Heart right ventricle (tissue), 16 donors: ENCODE measurements at regions of chr3 and their contacts with region 1.

Region 1: DNA sequence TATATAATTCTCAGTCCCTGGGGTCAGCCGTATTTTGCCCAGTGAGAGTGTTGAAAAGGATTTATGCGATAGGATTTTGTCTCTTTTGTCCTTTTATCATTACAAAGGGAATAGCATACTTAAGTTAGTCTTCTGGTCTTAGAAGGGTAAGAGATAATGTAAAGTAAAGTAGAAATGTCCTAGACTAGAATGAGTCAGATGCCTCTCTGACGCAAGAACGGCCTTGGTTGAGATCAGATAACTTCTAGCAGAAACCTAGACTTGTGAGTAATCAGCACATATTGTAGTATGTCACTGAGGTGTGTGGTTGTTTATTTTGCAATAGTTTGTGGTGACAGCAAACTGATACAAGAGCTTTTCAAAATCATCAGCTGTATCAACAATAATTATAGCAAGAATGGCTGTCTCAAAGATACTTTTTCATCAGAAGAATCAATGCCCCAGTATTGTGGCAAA is 866.1 kb downstream of the NSUN3 start:
- DNase-seq: no peak
- ATAC-seq: peak in 1 of 8 donors; percentile 73
- H3K4me3 ChIP-seq: no peak overlapping the region
- H3K27ac ChIP-seq: no peak overlapping the region
- H3K4me1 ChIP-seq: no peaks in the 10 kb centered on the region
- H3K27me3 ChIP-seq: no peaks in the 10 kb centered on the region
- CTCF ChIP-seq: no peak

Region 2: GRCh38 chr3:94862703-94863102 is 66.2 kb before region 1 on chr3:
- intact Hi-C with region 1: loop called in 1 of 10 experiments (anchors 10 kb)
- DNase-seq: no peak
- ATAC-seq: no peak
- H3K4me3 ChIP-seq: no peak overlapping the region
- H3K27ac ChIP-seq: no peak overlapping the region
- H3K4me1 ChIP-seq: no peaks in the 10 kb centered on the region
- H3K27me3 ChIP-seq: no peaks in the 10 kb centered on the region
- CTCF ChIP-seq: peak in 8 of 9 donors; percentile 18 to 60 (median 44)

Region 3: DNA sequence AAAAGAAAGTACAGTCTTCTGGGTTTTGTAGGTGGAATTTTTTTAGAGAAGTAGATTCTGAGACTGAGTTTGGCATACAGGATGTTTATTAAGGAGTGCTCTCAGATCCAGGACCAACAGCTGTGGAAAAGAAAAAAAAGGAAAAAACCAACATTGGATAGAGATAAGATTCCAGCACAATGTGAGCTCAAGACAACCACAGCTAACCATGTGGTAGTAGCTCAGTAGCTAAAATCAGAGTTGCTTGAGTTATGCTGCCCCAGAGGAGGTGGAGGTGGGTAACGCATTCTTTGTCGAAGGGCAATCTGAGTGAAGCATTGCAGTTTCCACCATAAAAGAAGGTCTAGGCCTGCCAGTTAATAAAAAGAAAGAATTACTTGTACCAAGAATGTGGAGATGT is 38.3 kb after region 1 on chr3:
- intact Hi-C with region 1: no loop called
- DNase-seq: no peak
- ATAC-seq: peak in 5 of 8 donors; percentile 38 to 90 (median 71)
- H3K4me3 ChIP-seq: no peak overlapping the region
- H3K27ac ChIP-seq: peak overlapping the region in 1 of 10 donors; percentile 41
- H3K4me1 ChIP-seq: no peaks in the 10 kb centered on the region
- H3K27me3 ChIP-seq: no peaks in the 10 kb centered on the region
- CTCF ChIP-seq: no peak